ENCODE measurements at regions of chr9 and their contacts with region 1.

Region 1: GRCh38 chr9:32811246-32811645 is 27.9 kb downstream of the TMEM215 start:
- DNase-seq: no peak
- ATAC-seq: no peak
- H3K4me3 ChIP-seq: no peak overlapping the region
- H3K27ac ChIP-seq: no peak overlapping the region
- H3K4me1 ChIP-seq: no peaks in the 10 kb centered on the region
- H3K27me3 ChIP-seq: peaks cover 0 to 10% of the 10 kb centered on the region in 2 experiments; a peak in 3 of 5 replicates
- CTCF ChIP-seq: no peak
- EP300 ChIP-seq: no peak
- POLR2A ChIP-seq: no peak
- RAD21 ChIP-seq: no peak

Region 2: GRCh38 chr9:32665101-32665500 is 146.1 kb before region 1 on chr9:
- CTCF ChIA-PET with region 1: no interaction called
- POLR2A ChIA-PET with region 1: no interaction called
- in situ Hi-C with region 1: no loop called
- intact Hi-C with region 1: loop called (anchors 10 kb)
- DNase-seq: no peak
- ATAC-seq: no peak
- H3K4me3 ChIP-seq: no peak overlapping the region
- H3K27ac ChIP-seq: no peak overlapping the region
- H3K4me1 ChIP-seq: no peaks in the 10 kb centered on the region
- H3K27me3 ChIP-seq: no peaks in the 10 kb centered on the region; a peak in 1 of 5 replicates
- CTCF ChIP-seq: no peak
- EP300 ChIP-seq: no peak
- POLR2A ChIP-seq: no peak
- RAD21 ChIP-seq: no peak